PC-9 (cell line): ENCODE measurements at regions of chr5 and their contacts with region 1.

Region 1: GRCh38 chr5:100950985-100951384 is 47.9 kb upstream of the ST8SIA4 start:
- DNase-seq: no peak
- H3K4me3 ChIP-seq: no peak overlapping the region
- H3K27ac ChIP-seq: no peak overlapping the region
- H3K4me1 ChIP-seq: no peaks in the 10 kb centered on the region
- H3K27me3 ChIP-seq: no peaks in the 10 kb centered on the region
- CTCF ChIP-seq: no peak

Region 2: GRCh38 chr5:100818340-100818739 is 132.6 kb before region 1 on chr5:
- CTCF ChIA-PET with region 1: no interaction called
- POLR2A ChIA-PET with region 1: interaction called, 10 read pairs
- intact Hi-C with region 1: no loop called
- DNase-seq: no peak
- H3K4me3 ChIP-seq: no peak overlapping the region
- H3K27ac ChIP-seq: no peak overlapping the region
- H3K4me1 ChIP-seq: peaks cover 7% of the 10 kb centered on the region
- H3K27me3 ChIP-seq: no peaks in the 10 kb centered on the region
- CTCF ChIP-seq: no peak

Region 3: DNA sequence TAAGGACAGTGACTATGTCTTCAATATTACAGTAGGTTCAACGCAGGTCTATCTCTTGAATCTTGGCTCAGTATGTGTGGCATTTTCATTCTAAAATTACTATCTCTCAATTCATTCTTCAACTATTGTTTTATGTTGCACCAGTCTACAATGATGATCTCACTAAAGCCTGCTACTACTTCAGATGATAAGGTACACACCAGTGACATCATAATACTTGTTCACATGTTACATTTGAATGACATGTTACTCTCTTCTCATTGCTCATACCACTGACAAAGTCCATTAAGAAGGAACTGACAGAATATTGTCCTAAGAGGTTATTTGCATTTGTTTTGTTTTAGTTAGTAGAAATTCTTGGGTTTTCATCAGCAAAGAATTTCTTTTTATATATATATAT is 117.3 kb after region 1 on chr5:
- CTCF ChIA-PET with region 1: no interaction called
- POLR2A ChIA-PET with region 1: no interaction called
- intact Hi-C with region 1: no loop called
- DNase-seq: no peak
- H3K4me3 ChIP-seq: no peak overlapping the region
- H3K27ac ChIP-seq: no peak overlapping the region
- H3K4me1 ChIP-seq: no peaks in the 10 kb centered on the region
- H3K27me3 ChIP-seq: no peaks in the 10 kb centered on the region
- CTCF ChIP-seq: no peak